ENCODE measurements at regions of chr2 and their contacts with region 1.

Region 1: GRCh38 chr2:179340668-179341067 is 76.0 kb upstream of the SESTD1 start:
- DNase-seq: peak; percentile 30
- H3K4me3 ChIP-seq: no peak overlapping the region
- H3K27ac ChIP-seq: no peak overlapping the region
- H3K4me1 ChIP-seq: peaks cover 16% of the 10 kb centered on the region
- H3K27me3 ChIP-seq: no peaks in the 10 kb centered on the region
- CTCF ChIP-seq: peak; percentile 34 to 63

Region 2: DNA sequence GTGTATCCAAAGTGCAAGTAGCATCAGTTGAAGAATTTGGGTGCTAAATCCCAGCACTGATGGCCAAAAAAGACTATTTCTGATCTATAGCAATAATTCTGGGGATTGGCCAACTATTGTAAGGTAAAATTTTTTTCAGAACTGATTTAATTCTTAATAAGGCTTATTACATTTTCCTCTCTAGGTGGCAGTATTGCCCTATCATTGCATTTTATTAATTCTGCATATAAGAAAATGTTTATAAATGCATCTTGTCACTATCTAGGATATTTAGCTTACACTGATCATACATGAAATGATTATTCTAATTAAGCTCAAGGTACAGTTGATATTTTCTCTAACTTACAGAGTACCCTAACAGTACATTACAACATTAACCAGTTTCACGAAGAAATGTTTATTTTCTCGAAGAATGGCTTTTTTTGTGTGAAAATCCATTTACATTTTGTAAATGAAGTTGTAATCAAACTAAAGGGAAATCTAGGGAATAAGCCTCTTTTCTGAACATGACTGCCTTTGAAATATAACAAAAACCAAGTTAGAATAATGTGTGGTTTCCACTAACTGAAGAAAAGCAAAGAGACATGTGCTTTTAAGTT is 544.5 kb before region 1 on chr2:
- CTCF ChIA-PET with region 1: no interaction called
- dilution Hi-C with region 1: no loop called
- in situ Hi-C with region 1: no loop called
- intact Hi-C with region 1: loop called (anchors 2 kb)
- DNase-seq: peak; percentile 10
- H3K4me3 ChIP-seq: no peak overlapping the region
- H3K27ac ChIP-seq: no peak overlapping the region
- H3K4me1 ChIP-seq: no peaks in the 10 kb centered on the region
- H3K27me3 ChIP-seq: no peaks in the 10 kb centered on the region
- CTCF ChIP-seq: peak; percentile 40 to 57

Region 3: GRCh38 chr2:179218848-179219594 is 121.6 kb before region 1 on chr2:
- CTCF ChIA-PET with region 1: no interaction called
- dilution Hi-C with region 1: no loop called
- in situ Hi-C with region 1: no loop called
- intact Hi-C with region 1: loop called (anchors 1 kb)
- DNase-seq: peak; percentile 65
- H3K4me3 ChIP-seq: no peak overlapping the region
- H3K27ac ChIP-seq: no peak overlapping the region
- H3K4me1 ChIP-seq: no peaks in the 10 kb centered on the region
- H3K27me3 ChIP-seq: no peaks in the 10 kb centered on the region
- CTCF ChIP-seq: peak; percentile 94 to 98

Region 4: DNA sequence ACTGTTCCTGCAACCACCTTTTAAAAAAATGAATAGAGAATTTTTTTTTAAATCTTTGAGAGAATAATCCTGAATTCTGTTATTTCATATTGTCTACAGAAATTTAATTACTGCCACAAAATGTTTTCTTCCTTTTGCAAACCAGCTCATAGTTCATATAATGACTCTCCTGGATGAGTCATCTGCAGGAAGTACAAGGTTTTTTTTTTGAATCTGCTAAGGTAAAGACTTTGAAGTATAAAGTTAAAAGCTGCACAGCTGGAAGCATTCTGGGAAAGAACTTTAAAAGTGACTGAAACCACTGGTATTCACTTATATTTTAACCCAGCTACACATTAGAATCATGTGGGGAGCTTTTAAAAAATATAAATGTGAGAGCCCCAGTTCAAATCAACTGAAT is 101.5 kb before region 1 on chr2:
- CTCF ChIA-PET with region 1: no interaction called
- dilution Hi-C with region 1: no loop called
- in situ Hi-C with region 1: loop called in 1 of 2 experiments (anchors 10 kb)
- intact Hi-C with region 1: no loop called
- DNase-seq: peak; percentile 58
- H3K4me3 ChIP-seq: peak overlapping the region in 1 of 3 experiments; percentile 11
- H3K27ac ChIP-seq: peak overlapping the region; percentile 29
- H3K4me1 ChIP-seq: peaks cover 25% of the 10 kb centered on the region
- H3K27me3 ChIP-seq: no peaks in the 10 kb centered on the region
- CTCF ChIP-seq: no peak

Region 5: DNA sequence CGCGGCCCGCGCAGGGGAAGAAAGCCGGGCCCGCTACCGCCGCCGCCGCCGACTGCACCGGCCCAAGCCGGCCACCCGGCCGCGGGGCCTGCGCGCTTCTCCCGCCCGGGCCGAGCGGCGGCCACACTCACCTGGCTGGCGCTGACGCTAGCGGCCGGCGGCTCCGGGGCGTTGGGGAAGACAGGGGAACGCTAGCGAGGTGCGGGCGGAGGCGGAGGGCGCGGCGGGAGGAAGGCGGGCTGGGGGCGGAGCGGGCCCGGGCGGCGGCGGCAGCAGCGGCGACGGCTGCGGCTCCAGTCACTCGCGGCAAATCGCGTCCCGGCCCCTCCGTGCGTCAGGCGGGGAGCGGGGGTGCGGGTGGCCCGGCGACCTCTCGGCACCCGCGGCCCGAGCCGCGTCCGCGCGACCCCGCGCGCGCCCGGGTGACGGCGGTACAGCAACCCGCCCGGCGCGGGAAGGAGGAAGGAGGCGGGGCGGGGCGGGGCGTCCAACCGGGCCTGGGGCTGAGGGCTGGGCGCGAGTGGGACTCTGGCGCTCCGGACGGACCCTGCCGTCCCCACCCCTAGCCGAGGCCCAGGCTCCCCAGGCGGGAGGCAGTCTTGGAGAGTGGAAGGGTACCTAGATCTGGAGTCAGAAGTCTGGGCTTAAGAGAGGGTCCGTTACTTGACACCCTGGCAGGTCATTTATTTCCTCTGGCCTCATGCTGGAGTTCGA is 76.1 kb before region 1 on chr2 and contains the start of gene SESTD1:
- CTCF ChIA-PET with region 1: no interaction called
- dilution Hi-C with region 1: no loop called
- in situ Hi-C with region 1: no loop called
- intact Hi-C with region 1: loop called (anchors 5 kb)
- DNase-seq: peak; percentile 53
- H3K4me3 ChIP-seq: peak within 1 kb of the TSS; percentile 61 to 80 (median 64)
- H3K27ac ChIP-seq: peak within 1 kb of the TSS; percentile 86
- H3K4me1 ChIP-seq: peaks cover 36% of the 10 kb centered on the region
- H3K27me3 ChIP-seq: no peaks in the 10 kb centered on the region
- CTCF ChIP-seq: no peak
- total RNA-seq, gene SESTD1: 20.7 to 32.1 TPM

Region 6: DNA sequence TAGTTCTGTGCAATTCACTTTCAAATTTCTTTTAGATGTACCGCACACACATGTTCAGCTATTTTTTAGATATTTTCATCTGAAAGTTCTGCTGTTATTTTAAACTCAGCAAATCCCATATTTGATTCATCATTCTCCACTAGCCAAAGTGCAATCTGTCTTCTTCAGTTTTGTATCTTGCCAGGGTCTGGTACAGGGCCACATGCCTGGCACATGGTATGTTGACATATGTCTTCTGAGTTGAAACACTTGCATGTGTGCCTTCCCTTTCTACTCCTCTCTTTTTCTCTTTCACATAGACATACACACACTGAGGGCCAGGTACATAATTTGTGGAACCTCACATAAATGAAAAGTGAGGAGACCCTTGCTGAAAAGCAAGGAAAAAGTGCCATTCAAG is 50.3 kb before region 1 on chr2:
- CTCF ChIA-PET with region 1: no interaction called
- dilution Hi-C with region 1: no loop called
- in situ Hi-C with region 1: no loop called
- intact Hi-C with region 1: no loop called
- DNase-seq: no peak
- H3K4me3 ChIP-seq: no peak overlapping the region
- H3K27ac ChIP-seq: no peak overlapping the region
- H3K4me1 ChIP-seq: no peaks in the 10 kb centered on the region
- H3K27me3 ChIP-seq: no peaks in the 10 kb centered on the region
- CTCF ChIP-seq: no peak

Measured in mammary epithelial cell (primary cell).